OCI-LY7 (cell line): ENCODE measurements at regions of chr5 and their contacts with region 1.

Region 1: DNA sequence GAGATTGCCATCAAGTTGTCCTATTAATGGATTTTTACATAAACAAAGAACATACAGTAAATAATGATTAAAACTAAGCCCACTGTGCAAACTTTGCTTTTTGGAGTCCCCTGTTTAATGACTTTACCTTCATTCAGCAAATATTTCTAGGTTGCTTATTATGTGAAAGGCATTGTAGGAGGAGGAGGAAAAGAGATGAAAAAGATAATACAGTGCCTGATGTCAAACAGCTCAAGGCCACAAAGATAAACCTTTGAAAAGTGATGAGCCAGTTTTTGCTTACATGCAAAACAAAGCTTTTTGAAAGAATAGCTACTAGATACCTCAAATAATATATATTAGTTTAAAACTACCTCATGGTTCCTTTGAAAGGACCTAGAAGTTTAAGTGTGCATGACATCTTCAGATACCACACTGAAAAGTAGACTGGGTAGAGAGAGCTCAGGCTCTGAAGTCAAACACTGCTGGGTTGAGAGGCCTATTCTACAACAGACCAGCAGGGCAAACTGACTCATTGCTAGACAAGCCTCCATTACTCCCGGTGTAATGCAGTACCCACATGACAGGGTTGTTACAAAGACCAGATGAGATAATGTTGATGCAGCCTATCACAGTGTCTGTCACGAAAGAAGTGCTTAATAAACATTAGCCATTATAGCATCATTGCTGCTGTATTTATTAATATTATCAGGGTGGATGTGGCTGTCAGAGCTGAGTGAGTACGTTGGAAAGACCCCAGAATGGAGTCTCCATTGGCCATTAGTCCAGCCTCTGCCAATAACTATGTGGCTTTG is 11.8 kb downstream of the DEPDC1B start:
- DNase-seq: no peak
- H3K4me3 ChIP-seq: no peak overlapping the region
- H3K27ac ChIP-seq: no peak overlapping the region
- H3K4me1 ChIP-seq: no peaks in the 10 kb centered on the region
- CTCF ChIP-seq: 0 out of 2 replicates have a peak, but pooled peaks have one; percentile 28

Region 2: GRCh38 chr5:60699530-60700382 is 11.6 kb after region 1 on chr5 and contains the start of gene DEPDC1B:
- CTCF ChIA-PET with region 1: interaction called, 4 read pairs
- POLR2A ChIA-PET with region 1: interaction called, 36 read pairs
- intact Hi-C with region 1: no loop called
- DNase-seq: peak; percentile 92
- H3K4me3 ChIP-seq: peak within 1 kb of the TSS; percentile 90
- H3K27ac ChIP-seq: peak within 1 kb of the TSS; percentile 83
- H3K4me1 ChIP-seq: peaks cover 26% of the 10 kb centered on the region
- CTCF ChIP-seq: peak; percentile 72
- total RNA-seq, gene DEPDC1B: 43.7 and 46.9 TPM in 2 replicates